ENCODE measurements at regions of chr2 and their contacts with region 1.

Region 1: DNA sequence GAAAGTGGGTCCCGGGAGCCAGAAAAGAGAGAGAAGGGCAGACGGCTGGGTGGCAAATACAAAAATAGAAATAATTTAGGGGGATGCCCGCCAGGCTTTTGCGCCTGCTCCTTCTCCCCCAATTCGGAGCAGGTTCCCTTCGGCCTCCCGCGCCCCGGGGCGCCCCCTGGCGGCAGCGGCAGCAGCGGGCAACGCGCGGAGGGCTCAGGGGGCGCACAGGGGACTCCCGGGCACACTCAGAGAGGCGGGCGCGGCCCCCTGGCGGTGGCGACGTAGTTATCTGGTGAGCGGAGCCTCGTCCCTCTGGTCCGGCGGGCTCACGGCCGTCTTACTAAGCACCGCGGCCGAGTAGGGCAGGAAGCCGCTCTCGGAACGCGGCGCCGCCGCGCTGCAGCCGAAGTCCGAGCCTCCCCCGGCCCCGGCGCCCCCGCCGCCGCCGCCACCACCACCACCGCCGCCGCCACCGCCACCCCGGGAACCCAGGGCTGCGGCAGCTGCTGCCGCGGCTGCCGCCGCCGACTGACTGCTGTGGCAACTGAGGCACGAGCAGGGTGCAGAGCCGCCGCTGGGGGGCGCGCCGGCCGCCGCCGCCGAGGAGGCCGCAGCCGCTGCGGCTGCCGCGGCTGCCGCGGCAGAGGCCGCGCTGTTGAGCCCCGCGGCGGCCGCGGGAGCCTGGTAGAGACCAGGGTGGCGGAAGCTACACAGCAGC is 3.8 kb downstream of the EVX2 start:
- DNase-seq: peak in 1 of 3 donors; percentile 44
- H3K4me3 ChIP-seq: no peak overlapping the region
- H3K4me3 Mint-ChIP-seq: peak overlapping the region in 1 of 2 donors; percentile 92
- H3K27ac ChIP-seq: no peak overlapping the region
- H3K27ac Mint-ChIP-seq: no peak overlapping the region
- H3K4me1 ChIP-seq: peaks cover 0 to 20% of the 10 kb centered on the region in 2 donors
- H3K4me1 Mint-ChIP-seq: peaks cover 26% of the 10 kb centered on the region
- H3K27me3 ChIP-seq: peaks cover 91 to 96% of the 10 kb centered on the region in 2 donors
- H3K27me3 Mint-ChIP-seq: peaks cover 85 to 95% (median 91%) of the 10 kb centered on the region in 3 donors
- CTCF ChIP-seq: peak; percentile 74

Region 2: GRCh38 chr2:176110975-176111663 is 31.1 kb after region 1 on chr2:
- intact Hi-C with region 1: loop called in 1 of 2 experiments (anchors 5 kb)
- DNase-seq: peak in 2 of 3 donors; percentile 18 to 33
- H3K4me3 ChIP-seq: no peak overlapping the region
- H3K4me3 Mint-ChIP-seq: peak overlapping the region in 1 of 2 donors; percentile 86
- H3K27ac ChIP-seq: no peak overlapping the region
- H3K27ac Mint-ChIP-seq: no peak overlapping the region
- H3K4me1 ChIP-seq: peaks cover 6 to 12% of the 10 kb centered on the region in 2 donors
- H3K4me1 Mint-ChIP-seq: peaks cover 19% of the 10 kb centered on the region
- H3K27me3 ChIP-seq: peaks cover 80 to 93% of the 10 kb centered on the region in 2 donors
- H3K27me3 Mint-ChIP-seq: peaks cover 89 to 98% (median 91%) of the 10 kb centered on the region in 3 donors
- CTCF ChIP-seq: peak; percentile 71

Measured in CD14-positive monocyte (primary cell).